H1 (cell line): ENCODE measurements at regions of chr2 and their contacts with region 1.

Region 1: GRCh38 chr2:202634556-202635427 is at the start of gene FAM117B:
- DNase-seq: peak; percentile 90 to 95
- H3K4me3 ChIP-seq: peak within 1 kb of the TSS; percentile 68 to 87 (median 86)
- H3K27ac ChIP-seq: peak within 1 kb of the TSS; percentile 90
- H3K4me1 ChIP-seq: peaks cover 0 to 3% (median 0%) of the 10 kb centered on the region in 4 experiments; a peak in 2 of 7 replicates
- H3K27me3 ChIP-seq: no peaks in the 10 kb centered on the region; a peak in 1 of 7 replicates
- CTCF ChIP-seq: 0 out of 4 replicates have a peak, but pooled peaks of 1 of the 3 experiments have one; percentile 1
- EP300 ChIP-seq: no peak
- POLR2A ChIP-seq: peak; percentile 44 to 80
- RAD21 ChIP-seq: peak in 1 of 2 experiments; percentile 10; a peak in 1 of 4 replicates
- total RNA-seq, gene FAM117B: 21.4 and 22.6 TPM in 2 replicates

Region 2: DNA sequence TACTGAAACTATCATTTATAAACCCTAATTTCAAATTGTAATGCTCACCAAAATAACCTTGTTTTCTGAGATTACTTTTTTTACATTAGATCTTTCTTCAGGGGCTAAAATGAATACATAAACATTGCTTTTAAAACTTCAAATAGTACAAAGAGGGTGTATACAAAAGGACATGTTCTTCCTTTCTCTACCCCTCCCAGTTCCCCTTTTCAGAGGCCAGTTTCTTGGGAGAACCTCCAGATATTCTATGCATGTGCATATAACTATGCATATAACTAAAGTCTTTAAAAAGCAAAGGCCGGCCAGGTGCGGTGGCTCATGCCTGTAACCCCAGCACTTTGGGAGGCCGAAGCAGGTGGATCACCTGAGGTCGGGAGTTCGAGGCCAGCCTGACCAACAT is 10.7 kb before region 1 on chr2:
- CTCF ChIA-PET with region 1: no interaction called
- POLR2A ChIA-PET with region 1: interaction called, 14 read pairs
- DNase-seq: no peak
- H3K4me3 ChIP-seq: no peak overlapping the region
- H3K27ac ChIP-seq: no peak overlapping the region
- H3K4me1 ChIP-seq: no peaks in the 10 kb centered on the region
- H3K27me3 ChIP-seq: no peaks in the 10 kb centered on the region
- CTCF ChIP-seq: no peak
- EP300 ChIP-seq: no peak
- POLR2A ChIP-seq: no peak
- RAD21 ChIP-seq: no peak